Activated CD4-positive, alpha-beta T cell treated with anti-CD3 and anti-CD28 coated beads, Interleukin-2, amount 10 ng/mL, durations not matched to agents 24 days and 14 days (primary cell): ENCODE measurements at regions of chr5 and their contacts with region 1.

Region 1: DNA sequence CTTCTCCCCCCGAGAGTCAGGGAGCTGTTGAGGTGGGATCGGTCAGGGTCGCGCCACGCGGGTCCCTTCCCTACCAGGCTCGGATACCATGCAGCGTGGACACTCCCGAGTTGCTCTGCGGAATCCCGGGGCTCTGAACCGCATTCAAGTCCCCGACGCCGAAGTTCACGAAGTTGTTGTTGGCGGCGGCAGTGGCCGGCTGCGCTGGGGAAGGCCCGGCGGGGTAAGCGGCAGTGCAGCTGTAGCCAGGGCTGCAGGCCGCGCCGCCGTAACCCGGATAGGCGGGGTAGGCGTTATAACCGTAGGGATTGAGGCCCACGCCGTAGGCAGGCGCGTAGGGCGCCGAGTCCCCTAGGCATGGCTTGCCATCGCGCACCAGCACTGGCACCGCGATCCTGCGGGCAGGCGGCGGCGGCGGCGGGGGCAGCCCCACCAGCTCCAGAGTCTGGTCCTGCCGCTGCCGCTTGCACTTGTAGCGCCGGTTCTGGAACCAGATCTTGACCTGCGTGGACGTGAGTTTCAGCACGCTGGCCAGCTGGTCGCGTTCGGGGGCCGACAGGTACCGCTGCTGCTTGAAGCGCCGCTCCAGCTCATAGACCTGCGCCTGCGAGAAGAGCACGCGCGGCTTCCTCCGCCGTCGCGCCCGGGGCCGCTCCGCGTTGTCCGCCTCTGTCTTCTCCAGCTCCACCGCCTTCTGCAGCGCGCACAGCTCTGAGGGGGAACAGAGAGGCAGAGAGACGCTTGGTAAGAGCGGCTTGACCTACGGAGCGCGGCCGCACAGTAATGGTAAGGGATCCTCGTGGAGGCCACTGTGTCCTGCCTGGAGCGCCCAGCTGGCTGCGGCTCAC is 2.3 kb downstream of the NKX2-5 start:
- DNase-seq: peak; percentile 62
- H3K4me3 Mint-ChIP-seq: peak overlapping the region; percentile 17
- H3K27ac Mint-ChIP-seq: peak overlapping the region; percentile 45
- H3K4me1 Mint-ChIP-seq: peaks cover 12% of the 10 kb centered on the region
- H3K27me3 Mint-ChIP-seq: peaks cover 87% of the 10 kb centered on the region

Region 2: GRCh38 chr5:172860520-172861443 is 371.9 kb before region 1 on chr5:
- intact Hi-C with region 1: no loop called
- DNase-seq: no peak
- H3K4me3 Mint-ChIP-seq: no peak overlapping the region
- H3K27ac Mint-ChIP-seq: no peak overlapping the region
- H3K4me1 Mint-ChIP-seq: peaks cover 2% of the 10 kb centered on the region
- H3K27me3 Mint-ChIP-seq: no peaks in the 10 kb centered on the region

Region 3: GRCh38 chr5:173245319-173246134 is 12.8 kb after region 1 on chr5:
- intact Hi-C with region 1: loop called (anchors 1 kb)
- DNase-seq: no peak
- H3K4me3 Mint-ChIP-seq: no peak overlapping the region
- H3K27ac Mint-ChIP-seq: peak overlapping the region; percentile 29
- H3K4me1 Mint-ChIP-seq: peaks cover 3% of the 10 kb centered on the region
- H3K27me3 Mint-ChIP-seq: peaks cover 90% of the 10 kb centered on the region